ENCODE measurements at regions of chr9 and their contacts with region 1.

Region 1: DNA sequence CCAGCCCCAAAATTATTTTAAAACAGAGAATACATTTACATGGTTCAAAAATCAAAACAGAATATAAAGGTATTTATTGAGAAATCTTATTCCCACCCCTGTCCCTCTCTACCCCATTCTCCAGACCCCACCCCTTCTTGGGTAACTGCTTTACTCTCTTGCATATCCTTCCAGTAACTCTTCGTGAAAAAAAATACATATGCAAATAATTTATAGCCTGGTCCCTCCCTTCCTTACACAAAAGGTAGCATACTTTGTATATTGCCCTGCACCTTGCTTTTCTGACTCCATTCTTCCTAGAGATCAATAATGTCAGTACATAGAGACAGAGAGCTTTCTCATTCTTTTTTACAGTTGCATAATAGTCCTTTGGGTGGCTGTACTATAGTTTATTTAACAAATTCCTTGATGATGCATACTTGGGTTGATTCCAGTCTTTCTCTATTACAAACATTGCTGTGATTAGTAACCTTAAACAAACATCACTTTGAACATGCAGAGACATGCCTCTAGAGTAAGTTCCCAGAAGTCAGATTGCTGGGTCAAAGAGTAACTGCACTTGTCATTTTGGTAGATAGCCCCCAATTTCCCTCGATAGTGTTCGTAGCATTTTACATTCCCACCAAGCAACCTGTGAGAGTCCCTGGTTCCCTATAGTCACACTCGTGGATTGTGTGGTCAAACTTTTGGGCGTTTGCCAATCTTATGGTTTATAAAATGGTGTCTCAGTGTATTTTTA is 47.8 kb downstream of the STOM start:
- DNase-seq: no peak
- ATAC-seq: no peak
- H3K4me3 ChIP-seq: no peak overlapping the region
- H3K4me3 Mint-ChIP-seq: no peak overlapping the region
- H3K27ac ChIP-seq: no peak overlapping the region
- H3K27ac Mint-ChIP-seq: no peak overlapping the region
- H3K4me1 ChIP-seq: peaks cover 5 to 16% of the 10 kb centered on the region in 2 donors
- H3K4me1 Mint-ChIP-seq: peaks cover 0 to 35% (median 7%) of the 10 kb centered on the region in 7 donors
- H3K27me3 ChIP-seq: no peaks in the 10 kb centered on the region
- H3K27me3 Mint-ChIP-seq: no peaks in the 10 kb centered on the region

Region 2: GRCh38 chr9:121107041-121107440 is 215.2 kb before region 1 on chr9:
- CTCF ChIA-PET with region 1: no interaction called
- POLR2A ChIA-PET with region 1: no interaction called
- intact Hi-C with region 1: loop called in 1 of 2 experiments (anchors 2 kb)
- DNase-seq: peak in 7 of 9 donors; percentile 21 to 68 (median 55)
- ATAC-seq: peak; percentile 94
- H3K4me3 ChIP-seq: no peak overlapping the region
- H3K4me3 Mint-ChIP-seq: no peak overlapping the region
- H3K27ac ChIP-seq: no peak overlapping the region
- H3K27ac Mint-ChIP-seq: peak overlapping the region in 8 of 9 donors; percentile 36 to 88 (median 61)
- H3K4me1 ChIP-seq: no peaks in the 10 kb centered on the region
- H3K4me1 Mint-ChIP-seq: peaks cover 15 to 29% (median 27%) of the 10 kb centered on the region in 7 donors
- H3K27me3 ChIP-seq: no peaks in the 10 kb centered on the region
- H3K27me3 Mint-ChIP-seq: no peaks in the 10 kb centered on the region

Region 3: GRCh38 chr9:121278535-121279261 is 43.5 kb before region 1 on chr9:
- CTCF ChIA-PET with region 1: no interaction called
- POLR2A ChIA-PET with region 1: no interaction called
- intact Hi-C with region 1: no loop called
- DNase-seq: peak in 6 of 9 donors; percentile 19 to 41 (median 26)
- ATAC-seq: peak; percentile 87
- H3K4me3 ChIP-seq: no peak overlapping the region
- H3K4me3 Mint-ChIP-seq: no peak overlapping the region
- H3K27ac ChIP-seq: no peak overlapping the region
- H3K27ac Mint-ChIP-seq: peak overlapping the region in 1 of 9 donors; percentile 14
- H3K4me1 ChIP-seq: no peaks in the 10 kb centered on the region
- H3K4me1 Mint-ChIP-seq: peaks cover 0 to 15% (median 4%) of the 10 kb centered on the region in 7 donors
- H3K27me3 ChIP-seq: no peaks in the 10 kb centered on the region
- H3K27me3 Mint-ChIP-seq: no peaks in the 10 kb centered on the region

Region 4: DNA sequence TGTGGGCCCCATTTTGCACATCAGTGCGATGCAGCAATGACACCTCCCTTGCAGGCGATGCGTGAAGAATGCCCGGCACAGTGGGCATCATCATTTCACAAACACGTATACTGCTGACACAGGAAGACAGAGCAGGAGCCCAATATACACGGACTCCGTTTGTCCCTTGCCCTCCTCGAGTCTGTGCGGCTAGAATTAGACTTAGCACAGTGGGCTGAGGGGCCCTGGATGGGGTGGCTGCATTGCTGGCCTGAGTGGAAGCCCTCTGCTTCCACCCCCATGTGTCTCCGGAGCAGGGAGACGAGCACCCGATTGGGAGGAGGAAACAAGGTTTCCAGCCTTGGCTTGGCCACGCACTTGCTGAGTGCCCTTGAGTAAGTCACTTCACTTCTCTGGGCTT is 13.4 kb before region 1 on chr9:
- CTCF ChIA-PET with region 1: interaction called, 11 read pairs
- POLR2A ChIA-PET with region 1: no interaction called
- intact Hi-C with region 1: no loop called
- DNase-seq: no peak
- ATAC-seq: no peak
- H3K4me3 ChIP-seq: no peak overlapping the region
- H3K4me3 Mint-ChIP-seq: no peak overlapping the region
- H3K27ac ChIP-seq: no peak overlapping the region
- H3K27ac Mint-ChIP-seq: no peak overlapping the region
- H3K4me1 ChIP-seq: no peaks in the 10 kb centered on the region
- H3K4me1 Mint-ChIP-seq: no peaks in the 10 kb centered on the region
- H3K27me3 ChIP-seq: no peaks in the 10 kb centered on the region
- H3K27me3 Mint-ChIP-seq: peaks cover 0 to 2% (median 0%) of the 10 kb centered on the region in 5 donors

Region 5: DNA sequence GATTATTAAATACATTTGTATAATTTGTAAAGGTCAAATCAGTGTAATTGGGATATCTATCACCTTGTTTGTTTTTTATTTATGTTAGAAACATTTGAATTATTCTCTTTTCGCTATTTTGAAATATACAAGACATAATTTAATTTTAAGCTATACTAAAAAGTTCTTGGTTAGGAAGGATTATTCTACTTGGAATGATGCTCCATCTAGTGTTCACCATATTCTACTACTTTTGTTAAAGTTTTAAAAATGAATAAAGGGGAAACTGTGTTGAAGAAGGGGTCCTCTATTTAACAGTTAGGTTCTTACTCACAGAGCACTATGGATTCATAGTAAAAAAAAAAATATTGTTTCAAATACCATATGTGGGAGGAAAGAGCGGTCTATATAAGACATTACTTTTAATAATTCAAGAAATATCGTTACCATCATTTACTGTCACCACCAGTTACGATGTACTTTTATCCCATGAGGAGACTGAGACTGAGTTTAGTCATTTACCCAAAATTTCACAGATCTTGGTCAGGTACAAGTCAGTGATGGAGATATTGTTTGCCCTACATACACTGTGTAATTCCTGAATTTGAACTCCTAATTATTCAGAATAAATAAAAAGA is 54.1 kb after region 1 on chr9:
- CTCF ChIA-PET with region 1: interaction called, 15 read pairs
- POLR2A ChIA-PET with region 1: no interaction called
- intact Hi-C with region 1: loop called (anchors 1 kb)
- DNase-seq: no peak
- ATAC-seq: no peak
- H3K4me3 ChIP-seq: no peak overlapping the region
- H3K4me3 Mint-ChIP-seq: no peak overlapping the region
- H3K27ac ChIP-seq: no peak overlapping the region
- H3K27ac Mint-ChIP-seq: no peak overlapping the region
- H3K4me1 ChIP-seq: no peaks in the 10 kb centered on the region
- H3K4me1 Mint-ChIP-seq: peaks cover 0 to 17% (median 9%) of the 10 kb centered on the region in 7 donors
- H3K27me3 ChIP-seq: no peaks in the 10 kb centered on the region
- H3K27me3 Mint-ChIP-seq: peaks cover 0 to 9% (median 0%) of the 10 kb centered on the region in 5 donors

Region 6: GRCh38 chr9:121399883-121400607 is 77.8 kb after region 1 on chr9:
- CTCF ChIA-PET with region 1: interaction called, 190 read pairs
- POLR2A ChIA-PET with region 1: interaction called, 3 read pairs
- intact Hi-C with region 1: loop called (anchors 1 kb)
- DNase-seq: peak in 7 of 9 donors; percentile 25 to 67 (median 54)
- ATAC-seq: peak; percentile 66
- H3K4me3 ChIP-seq: no peak overlapping the region
- H3K4me3 Mint-ChIP-seq: no peak overlapping the region
- H3K27ac ChIP-seq: no peak overlapping the region
- H3K27ac Mint-ChIP-seq: no peak overlapping the region
- H3K4me1 ChIP-seq: no peaks in the 10 kb centered on the region
- H3K4me1 Mint-ChIP-seq: peaks cover 0 to 6% (median 0%) of the 10 kb centered on the region in 7 donors
- H3K27me3 ChIP-seq: no peaks in the 10 kb centered on the region
- H3K27me3 Mint-ChIP-seq: peaks cover 0 to 21% (median 0%) of the 10 kb centered on the region in 5 donors

Measured in naive thymus-derived CD4-positive, alpha-beta T cell (primary cell).